Brain microvascular endothelial cell (primary cell): ENCODE measurements at regions of chr16 and their contacts with region 1.

Region 1: DNA sequence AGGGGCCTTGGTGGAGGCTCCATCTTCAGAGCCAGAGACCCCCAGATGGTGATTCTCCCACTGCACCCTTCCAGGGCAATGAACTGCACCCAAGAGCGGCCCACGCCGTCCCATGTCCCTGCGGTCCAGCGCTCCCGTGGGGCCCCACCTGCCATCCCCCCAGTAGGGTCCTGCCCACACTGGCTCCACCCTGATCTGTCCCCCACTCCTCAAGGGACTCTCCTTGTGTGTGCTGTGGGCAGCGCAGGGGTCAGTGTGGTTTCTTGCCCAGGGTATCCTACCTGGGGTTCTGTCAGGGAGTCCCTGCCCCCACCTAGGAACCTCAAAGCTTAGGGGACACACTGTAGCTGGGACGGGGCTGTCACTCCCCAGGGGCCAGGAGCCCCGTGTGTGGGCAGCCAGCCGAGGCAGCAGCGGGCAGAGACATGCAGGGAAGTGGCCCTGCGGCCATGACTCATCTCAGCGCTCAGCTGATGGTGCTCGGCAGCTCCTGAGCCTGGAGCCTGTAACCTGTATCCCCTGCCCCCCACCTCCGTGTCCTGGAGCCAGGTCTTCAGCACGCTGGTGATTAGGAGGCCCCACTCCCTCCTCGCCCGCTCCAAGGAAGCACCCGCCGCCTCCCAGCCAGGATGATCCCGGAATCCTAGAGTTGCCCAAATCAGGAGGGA is 35.7 kb upstream of the SSTR5 start:
- DNase-seq: no peak
- H3K4me3 ChIP-seq: no peak overlapping the region
- H3K27ac ChIP-seq: no peak overlapping the region
- H3K27me3 ChIP-seq: peaks cover 4% of the 10 kb centered on the region
- CTCF ChIP-seq: no peak

Region 2: DNA sequence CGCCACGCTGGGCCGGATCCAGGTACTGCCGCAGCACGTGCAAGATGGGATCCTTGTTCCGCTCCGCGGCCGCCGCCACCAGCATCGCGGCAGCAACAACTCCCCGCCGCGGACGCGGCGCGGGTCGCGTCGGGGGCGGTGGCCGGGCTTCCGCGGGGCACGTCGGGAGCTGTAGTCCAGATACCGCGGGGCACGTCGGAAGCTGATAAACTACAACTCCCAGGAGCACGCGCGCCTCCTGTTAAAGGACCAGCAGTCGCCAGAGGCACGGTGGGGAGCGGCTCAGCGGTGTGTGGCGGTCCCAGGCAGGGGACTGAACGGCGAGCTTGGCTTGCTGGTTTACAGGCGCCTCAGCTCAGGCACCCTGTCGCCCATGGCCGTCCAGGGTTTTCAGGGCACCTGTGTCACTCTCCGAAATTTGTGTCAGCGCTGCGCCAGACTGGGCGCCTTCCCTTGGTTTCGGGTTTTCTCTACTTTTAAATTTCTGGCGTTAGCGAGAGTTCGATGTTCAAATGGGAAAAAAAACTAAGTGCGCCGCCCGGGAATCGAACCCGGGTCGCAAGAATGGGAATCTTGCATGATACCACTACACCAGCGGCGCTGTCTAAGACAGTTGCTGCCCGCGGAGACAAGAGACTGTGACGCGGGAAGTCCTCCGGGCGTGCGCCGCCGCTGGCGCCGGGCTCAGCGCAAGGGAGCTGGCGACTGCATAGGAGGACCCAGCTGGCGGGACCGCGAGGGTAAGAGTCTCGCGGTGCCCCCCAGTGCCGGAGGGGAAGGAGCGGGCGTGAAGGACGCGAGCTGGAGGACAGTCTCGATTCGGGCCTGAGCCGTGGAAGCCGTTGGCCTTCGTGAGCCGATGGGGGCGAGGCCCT is 400.4 kb before region 1 on chr16 and contains the start of gene METTL26:
- in situ Hi-C with region 1: no loop called
- DNase-seq: peak; percentile 91
- H3K4me3 ChIP-seq: peak within 1 kb of the TSS; percentile 81
- H3K27ac ChIP-seq: peak within 1 kb of the TSS; percentile 61
- H3K27me3 ChIP-seq: no peaks in the 10 kb centered on the region
- CTCF ChIP-seq: no peak

Region 3: DNA sequence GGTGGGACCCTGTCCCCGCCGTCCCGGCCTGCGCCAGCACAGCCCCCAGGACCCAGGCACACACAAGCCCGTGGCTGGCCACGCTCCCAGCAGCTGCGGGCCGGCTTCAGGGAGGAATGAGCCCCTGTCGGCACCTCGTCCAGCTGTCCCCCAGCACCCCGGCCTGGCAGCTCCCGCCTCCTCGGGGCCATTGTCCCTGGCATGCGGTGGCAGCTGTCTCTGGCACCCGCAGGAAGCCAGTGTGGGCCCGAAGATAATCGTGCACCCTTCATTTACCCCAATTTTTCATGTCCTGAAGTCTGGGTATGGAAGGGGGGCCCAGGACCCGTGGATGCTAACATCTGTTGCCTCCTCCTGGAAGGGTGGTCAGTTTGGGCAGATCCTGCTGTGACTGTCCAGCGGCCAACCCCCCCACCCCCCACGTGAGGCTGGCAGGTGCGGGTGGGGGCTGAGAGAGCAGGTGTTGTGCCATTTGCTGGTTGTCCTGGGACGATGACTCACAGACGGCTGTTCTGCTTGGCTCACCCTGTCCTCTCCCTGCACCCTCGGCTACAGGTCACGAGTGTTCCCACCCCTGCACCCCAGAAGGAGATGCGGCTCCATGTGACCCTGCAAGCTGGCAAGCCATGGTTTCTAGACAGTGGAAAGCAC is 62.1 kb before region 1 on chr16:
- in situ Hi-C with region 1: loop called (anchors 5 kb)
- DNase-seq: no peak
- H3K4me3 ChIP-seq: no peak overlapping the region
- H3K27ac ChIP-seq: no peak overlapping the region
- H3K27me3 ChIP-seq: peaks cover 7% of the 10 kb centered on the region
- CTCF ChIP-seq: no peak

Region 4: GRCh38 chr16:1002399-1003161 is 34.3 kb before region 1 on chr16:
- in situ Hi-C with region 1: no loop called
- DNase-seq: peak; percentile 79
- H3K4me3 ChIP-seq: no peak overlapping the region
- H3K27ac ChIP-seq: no peak overlapping the region
- H3K27me3 ChIP-seq: peaks cover 43% of the 10 kb centered on the region
- CTCF ChIP-seq: no peak